ENCODE measurements at regions of chr12 and their contacts with region 1.

Region 1: GRCh38 chr12:71492604-71493003 is 53.0 kb downstream of the LGR5 start:
- DNase-seq: no peak

Region 2: DNA sequence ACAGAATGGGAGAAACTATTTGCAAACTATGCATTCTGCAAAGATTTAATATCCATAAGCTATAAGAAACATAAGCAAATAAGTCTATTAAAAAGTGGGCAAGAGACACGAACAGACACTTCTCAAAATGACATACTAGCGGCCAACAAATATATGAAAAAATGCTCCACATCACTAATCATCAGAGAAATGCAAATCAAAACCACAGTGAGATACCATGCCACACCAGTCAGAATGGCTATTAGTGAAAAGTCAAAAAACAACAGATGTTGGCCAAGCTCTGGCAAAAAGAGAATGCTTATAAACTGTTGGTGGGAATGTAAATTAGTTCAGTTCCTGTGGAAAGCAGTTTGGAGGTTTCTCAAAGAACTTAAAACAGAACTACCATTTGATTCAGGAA is 1005.2 kb before region 1 on chr12:
- intact Hi-C with region 1: no loop called
- DNase-seq: no peak

Region 3: DNA sequence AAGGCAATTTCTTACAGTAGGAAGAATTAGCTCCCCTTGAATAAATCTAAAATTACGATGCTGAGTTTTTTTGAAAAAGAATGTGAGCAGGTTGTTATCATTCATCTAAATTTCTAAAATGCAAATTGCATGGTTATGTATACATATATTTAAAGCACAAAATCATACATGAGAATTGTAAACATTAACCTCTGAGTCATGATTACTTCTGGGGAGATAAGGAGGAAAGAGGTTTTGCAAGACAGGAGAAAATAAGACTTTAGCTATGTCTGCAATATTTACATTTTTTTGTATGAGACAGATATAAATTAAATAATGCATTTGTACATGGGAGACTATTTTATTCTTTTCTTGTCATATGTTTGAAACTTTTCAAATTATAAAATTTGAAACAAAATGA is 407.0 kb before region 1 on chr12:
- intact Hi-C with region 1: loop called in 1 of 2 experiments (anchors 5 kb)
- DNase-seq: no peak

Region 4: GRCh38 chr12:71208053-71208685 is 284.4 kb before region 1 on chr12:
- intact Hi-C with region 1: no loop called
- DNase-seq: no peak

Region 5: GRCh38 chr12:71335151-71335962 is 157.2 kb before region 1 on chr12:
- intact Hi-C with region 1: no loop called
- DNase-seq: no peak

Measured in posterior vena cava (tissue), 2 donors.